Activated CD8-positive, alpha-beta memory T cell treated with anti-CD3 and anti-CD28 coated beads, Interleukin-2, amount 10 ng/mL, durations not matched to agents 7 days and 5 days (primary cell): ENCODE measurements at regions of chr3 and their contacts with region 1.

Region 1: DNA sequence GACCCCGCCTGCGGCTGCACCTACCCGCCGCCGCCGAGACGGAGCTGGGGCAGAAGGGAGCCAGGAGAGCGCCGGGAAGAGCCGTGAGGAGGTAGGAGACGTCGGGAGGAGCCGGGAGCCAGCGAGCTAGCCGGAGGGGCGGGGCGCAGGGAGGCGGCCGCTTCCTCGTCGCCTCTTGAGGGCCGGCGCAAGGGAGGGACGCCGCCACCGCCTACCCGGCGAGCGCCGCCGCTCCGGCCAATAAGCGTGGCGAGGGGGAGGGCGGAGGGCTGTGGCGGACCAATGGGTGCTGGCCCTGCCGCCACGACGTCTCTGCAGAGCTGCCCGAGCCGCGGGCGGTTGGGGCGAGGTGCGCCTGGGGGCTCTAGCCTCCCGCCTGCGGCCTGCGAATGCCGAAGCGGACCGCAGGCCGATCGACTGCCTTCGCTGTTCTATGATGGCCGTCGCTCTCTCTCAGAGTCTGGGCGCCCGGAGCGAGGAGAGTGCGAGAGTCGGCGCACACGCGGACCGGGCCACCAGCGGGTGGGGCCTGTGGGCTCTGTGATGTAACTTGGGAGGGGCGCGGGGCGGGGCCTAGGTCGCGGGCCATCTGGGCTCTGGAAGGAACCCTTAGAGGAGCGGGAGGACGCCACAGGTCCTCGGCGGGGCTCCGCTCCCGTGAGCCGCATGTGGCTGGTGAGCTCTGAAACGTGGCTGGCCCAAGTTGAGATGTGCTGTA is 72.7 kb upstream of the MAP4 start:
- DNase-seq: peak; percentile 96
- ATAC-seq: peak; percentile 97
- H3K4me3 Mint-ChIP-seq: peak overlapping the region; percentile 93
- H3K27ac Mint-ChIP-seq: peak overlapping the region; percentile 97
- H3K4me1 Mint-ChIP-seq: peaks cover 31% of the 10 kb centered on the region
- H3K27me3 Mint-ChIP-seq: no peaks in the 10 kb centered on the region

Region 2: GRCh38 chr3:48112813-48113212 is 23.9 kb after region 1 on chr3:
- CTCF ChIA-PET with region 1: interaction called, 11 read pairs
- DNase-seq: no peak
- ATAC-seq: no peak
- H3K4me3 Mint-ChIP-seq: peak overlapping the region; percentile 65
- H3K27ac Mint-ChIP-seq: peak overlapping the region; percentile 89
- H3K4me1 Mint-ChIP-seq: peaks cover 25% of the 10 kb centered on the region
- H3K27me3 Mint-ChIP-seq: no peaks in the 10 kb centered on the region